T-cell (primary cell): ENCODE measurements at regions of chr13 and their contacts with region 1.

Region 1: DNA sequence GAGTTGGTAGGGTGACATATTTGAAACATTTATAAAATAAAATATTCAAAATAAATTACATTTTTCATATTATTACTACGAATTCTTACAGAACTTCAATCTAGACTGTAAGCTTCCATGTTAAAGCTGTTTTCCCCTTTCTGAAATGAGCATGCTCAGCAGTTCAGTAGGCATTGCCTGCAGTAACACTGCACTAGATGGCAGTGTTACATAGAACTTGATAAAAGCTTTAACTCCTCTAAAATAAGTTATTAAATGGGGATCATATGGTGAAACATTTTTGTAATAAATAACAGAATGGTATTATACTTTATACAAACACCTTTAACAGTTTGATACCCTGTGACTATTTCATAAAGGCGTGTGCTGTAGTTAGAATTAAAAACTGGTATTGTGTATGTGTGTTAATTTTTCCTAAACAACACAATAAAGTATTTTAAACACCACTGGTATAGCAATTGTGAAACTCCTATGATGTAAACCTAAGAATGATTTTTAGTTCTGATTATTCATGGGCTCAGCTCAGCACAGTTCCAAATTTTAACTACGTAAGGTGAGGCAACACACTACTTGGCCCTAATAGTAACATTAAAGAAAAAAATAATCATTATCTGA is 11.6 kb upstream of the GPR18 start:
- DNase-seq: peak in 16 of 35 experiments; percentile 15 to 81 (median 25)
- ATAC-seq: peak; percentile 66 to 81 (median 70)
- H3K4me3 ChIP-seq: no peak overlapping the region
- H3K4me3 Mint-ChIP-seq: no peak overlapping the region
- H3K27ac ChIP-seq: peak overlapping the region; percentile 87
- H3K27ac Mint-ChIP-seq: peak overlapping the region; percentile 84 to 87
- H3K4me1 ChIP-seq: peaks cover 26 to 32% of the 10 kb centered on the region in 2 experiments
- H3K4me1 Mint-ChIP-seq: peaks cover 63 to 65% (median 64%) of the 10 kb centered on the region in 3 donors
- H3K27me3 ChIP-seq: no peaks in the 10 kb centered on the region
- H3K27me3 Mint-ChIP-seq: no peaks in the 10 kb centered on the region

Region 2: DNA sequence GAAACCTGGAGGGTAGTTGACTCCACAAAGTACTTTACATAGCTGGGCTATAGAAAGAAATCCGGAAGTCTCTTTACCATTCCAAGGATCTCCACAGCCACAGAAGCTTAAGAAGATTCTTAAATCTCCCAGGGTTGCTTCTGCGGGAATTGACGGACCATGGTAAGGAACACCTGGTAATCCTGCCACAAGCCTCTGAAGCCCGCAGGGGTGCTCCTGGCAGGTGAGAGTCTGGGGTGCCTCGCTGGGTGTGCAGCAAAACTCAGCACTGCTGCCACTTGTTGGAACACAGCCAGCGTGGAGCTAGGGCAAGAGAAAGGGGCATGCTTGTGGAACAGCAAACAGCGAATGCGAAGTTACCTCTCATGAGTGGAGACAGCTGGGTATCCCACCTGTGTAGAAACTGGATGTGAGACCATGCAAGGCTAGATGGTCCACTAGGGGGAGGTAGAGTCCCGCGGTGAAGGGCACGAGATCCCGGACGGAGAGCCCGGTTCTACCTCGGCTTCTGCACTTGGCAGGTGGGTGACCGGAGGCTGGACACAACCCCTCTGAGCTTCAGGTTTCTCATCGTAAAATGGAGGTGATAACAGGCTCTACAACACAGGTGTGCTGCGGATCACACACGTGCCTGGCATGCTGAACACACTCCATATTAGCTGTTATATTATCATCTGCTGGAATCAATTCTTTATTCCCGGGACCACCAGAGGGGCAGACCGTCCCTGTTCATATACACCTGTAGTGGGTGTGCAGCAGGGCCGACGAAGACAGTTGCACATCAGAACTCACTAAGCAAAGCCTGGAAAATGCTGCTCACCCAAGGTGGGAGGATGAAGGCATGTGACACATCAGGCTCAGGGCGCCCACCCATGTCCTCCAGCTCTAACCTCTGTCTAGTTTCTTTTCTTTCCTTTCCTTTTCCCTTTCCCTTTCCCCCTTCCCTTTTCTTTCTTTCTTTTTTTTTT is 93.1 kb before region 1 on chr13:
- CTCF ChIA-PET with region 1: interaction called, 45 to 246 read pairs
- POLR2A ChIA-PET with region 1: interaction called, 3 to 6 read pairs
- DNase-seq: peak; percentile 33 to 90 (median 72)
- ATAC-seq: peak; percentile 85 to 91 (median 89)
- H3K4me3 ChIP-seq: peak overlapping the region in 1 of 2 donors; percentile 18
- H3K4me3 Mint-ChIP-seq: peak overlapping the region; percentile 48 to 54 (median 52)
- H3K27ac ChIP-seq: no peak overlapping the region
- H3K27ac Mint-ChIP-seq: peak overlapping the region; percentile 49 to 52
- H3K4me1 ChIP-seq: peaks cover 18 to 39% of the 10 kb centered on the region in 2 experiments
- H3K4me1 Mint-ChIP-seq: peaks cover 37 to 45% (median 43%) of the 10 kb centered on the region in 3 donors
- H3K27me3 ChIP-seq: no peaks in the 10 kb centered on the region
- H3K27me3 Mint-ChIP-seq: peaks cover 0 to 4% of the 10 kb centered on the region in 2 donors

Region 3: GRCh38 chr13:99228737-99229691 is 40.7 kb before region 1 on chr13:
- CTCF ChIA-PET with region 1: interaction called, 5 to 6 read pairs
- POLR2A ChIA-PET with region 1: interaction called in 1 of 2 experiments, 11 read pairs
- DNase-seq: peak in 1 of 35 experiments; percentile 60
- ATAC-seq: peak; percentile 39 to 74 (median 47)
- H3K4me3 ChIP-seq: peak overlapping the region; percentile 11 to 39
- H3K4me3 Mint-ChIP-seq: peak overlapping the region; percentile 51 to 75 (median 74)
- H3K27ac ChIP-seq: peak overlapping the region; percentile 74
- H3K27ac Mint-ChIP-seq: peak overlapping the region; percentile 88 to 94
- H3K4me1 ChIP-seq: peaks cover 47 to 66% of the 10 kb centered on the region in 2 experiments
- H3K4me1 Mint-ChIP-seq: peaks cover 71 to 82% (median 79%) of the 10 kb centered on the region in 3 donors
- H3K27me3 ChIP-seq: no peaks in the 10 kb centered on the region
- H3K27me3 Mint-ChIP-seq: no peaks in the 10 kb centered on the region

Region 4: GRCh38 chr13:99301913-99302636 is 32.3 kb after region 1 on chr13:
- CTCF ChIA-PET with region 1: interaction called, 6 to 32 read pairs
- POLR2A ChIA-PET with region 1: interaction called, 4 to 19 read pairs
- DNase-seq: no peak
- ATAC-seq: no peak
- H3K4me3 ChIP-seq: peak overlapping the region; percentile 3 to 68
- H3K4me3 Mint-ChIP-seq: peak overlapping the region; percentile 94 to 99 (median 96)
- H3K27ac ChIP-seq: peak overlapping the region; percentile 80
- H3K27ac Mint-ChIP-seq: peak overlapping the region; percentile 96 to 98
- H3K4me1 ChIP-seq: peaks cover 35 to 58% of the 10 kb centered on the region in 2 experiments
- H3K4me1 Mint-ChIP-seq: peaks cover 71 to 88% (median 81%) of the 10 kb centered on the region in 3 donors
- H3K27me3 ChIP-seq: no peaks in the 10 kb centered on the region
- H3K27me3 Mint-ChIP-seq: no peaks in the 10 kb centered on the region

Region 5: DNA sequence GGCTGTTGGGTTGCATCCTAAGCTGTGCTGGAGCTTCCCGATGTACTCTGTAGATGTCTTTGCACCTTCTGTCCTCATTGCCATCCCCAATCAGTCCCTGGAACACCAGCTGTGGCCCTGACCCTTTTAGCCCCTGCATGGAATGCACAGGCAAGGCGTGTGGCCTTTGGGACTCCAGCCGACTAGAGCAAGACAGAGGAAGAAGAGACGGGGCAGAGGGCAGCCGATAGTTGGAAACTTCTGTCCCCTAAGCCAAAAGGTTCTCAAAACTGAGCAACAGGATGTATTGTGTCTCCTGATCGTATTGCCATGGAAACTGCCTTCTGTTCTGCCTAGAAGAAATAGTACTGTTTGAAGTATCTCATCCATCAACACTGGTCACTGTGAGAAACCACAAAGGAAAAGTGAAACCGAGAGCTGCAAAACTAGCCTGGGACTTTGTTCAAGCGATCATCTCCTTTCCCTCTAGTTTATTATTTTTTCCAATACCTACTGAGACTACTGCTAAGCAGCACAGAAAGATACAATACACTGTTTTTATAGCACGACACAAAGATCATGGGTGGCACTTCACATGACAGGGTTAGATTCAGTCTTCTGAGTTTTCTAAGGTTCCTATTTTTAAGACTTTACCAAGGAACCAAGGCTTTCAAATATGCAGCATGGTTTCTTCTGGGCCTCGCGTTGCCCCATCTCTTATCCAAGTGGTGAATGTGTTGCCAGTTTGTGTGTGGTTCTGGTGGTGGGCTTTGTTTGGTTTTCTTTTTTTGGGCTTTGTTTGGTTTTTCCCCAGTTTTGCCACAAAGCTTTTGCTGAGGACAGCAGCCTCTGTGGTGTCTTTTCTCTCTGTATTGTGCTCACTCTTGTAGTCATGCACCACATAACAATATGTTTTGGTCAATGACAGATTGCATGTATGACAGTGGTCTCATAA is 86.7 kb after region 1 on chr13:
- CTCF ChIA-PET with region 1: interaction called, 5 to 46 read pairs
- POLR2A ChIA-PET with region 1: interaction called in 1 of 2 experiments, 5 read pairs
- DNase-seq: peak in 32 of 35 experiments; percentile 32 to 93 (median 60)
- ATAC-seq: peak; percentile 51 to 73 (median 55)
- H3K4me3 ChIP-seq: peak overlapping the region in 1 of 2 donors; percentile 28
- H3K4me3 Mint-ChIP-seq: peak overlapping the region; percentile 64 to 73 (median 65)
- H3K27ac ChIP-seq: peak overlapping the region; percentile 100
- H3K27ac Mint-ChIP-seq: peak overlapping the region; percentile 99
- H3K4me1 ChIP-seq: peaks cover 92 to 95% of the 10 kb centered on the region in 2 experiments
- H3K4me1 Mint-ChIP-seq: peaks cover 98 to 100% (median 99%) of the 10 kb centered on the region in 3 donors
- H3K27me3 ChIP-seq: no peaks in the 10 kb centered on the region
- H3K27me3 Mint-ChIP-seq: no peaks in the 10 kb centered on the region

Region 6: DNA sequence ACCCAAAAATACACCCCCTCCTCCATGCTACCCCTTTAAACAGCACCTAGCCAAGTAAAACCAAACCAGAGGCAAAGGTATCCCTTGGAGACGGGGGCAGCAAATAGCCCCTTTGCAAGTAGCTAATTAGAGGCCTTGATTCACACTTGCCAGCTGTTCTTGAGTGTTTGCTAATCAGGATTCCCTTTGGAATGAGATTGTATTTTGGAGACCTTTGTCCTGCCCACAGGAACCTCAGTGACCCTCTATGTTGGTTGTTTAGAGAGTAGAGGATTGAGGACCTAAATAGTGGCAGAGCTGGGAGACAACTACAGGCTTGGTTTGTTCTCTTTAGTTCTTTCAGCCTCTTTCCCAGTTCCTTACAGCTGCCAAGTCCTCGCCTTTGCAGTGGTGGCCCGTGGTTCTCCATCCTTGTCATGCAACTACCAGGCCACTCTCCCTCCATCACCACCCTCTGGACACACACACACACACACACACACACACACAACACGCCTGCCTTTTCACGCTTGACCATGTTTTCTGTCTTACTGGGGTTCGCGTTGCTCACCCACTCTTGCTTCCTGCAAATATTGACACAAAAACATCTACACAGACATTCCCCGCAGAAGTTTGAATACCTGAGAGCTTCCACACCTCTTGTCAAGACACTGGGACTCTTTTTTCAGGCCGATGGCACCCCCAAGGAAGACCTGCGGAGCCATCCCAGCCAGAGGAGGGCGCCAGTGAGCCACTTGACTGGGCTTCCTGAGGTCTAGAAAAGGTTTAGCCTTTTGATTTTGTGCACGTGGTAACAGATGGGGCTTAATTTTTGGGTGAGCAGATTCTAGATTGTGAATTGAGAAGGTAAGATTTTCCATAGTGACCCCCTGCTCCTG is 117.4 kb after region 1 on chr13:
- CTCF ChIA-PET with region 1: interaction called, 29 to 57 read pairs
- POLR2A ChIA-PET with region 1: interaction called, 3 to 12 read pairs
- DNase-seq: peak; percentile 68 to 93 (median 85)
- ATAC-seq: peak; percentile 36 to 54 (median 42)
- H3K4me3 ChIP-seq: no peak overlapping the region
- H3K4me3 Mint-ChIP-seq: peak overlapping the region in 1 of 3 donors; percentile 46
- H3K27ac ChIP-seq: peak overlapping the region; percentile 81
- H3K27ac Mint-ChIP-seq: peak overlapping the region; percentile 98
- H3K4me1 ChIP-seq: peaks cover 53 to 76% of the 10 kb centered on the region in 2 experiments
- H3K4me1 Mint-ChIP-seq: peaks cover 65 to 73% (median 73%) of the 10 kb centered on the region in 3 donors
- H3K27me3 ChIP-seq: no peaks in the 10 kb centered on the region
- H3K27me3 Mint-ChIP-seq: no peaks in the 10 kb centered on the region

Region 7: GRCh38 chr13:99442273-99442895 is 172.7 kb after region 1 on chr13:
- CTCF ChIA-PET with region 1: interaction called, 53 to 195 read pairs
- POLR2A ChIA-PET with region 1: interaction called in 1 of 2 experiments, 3 read pairs
- DNase-seq: peak in 25 of 35 experiments; percentile 23 to 81 (median 44)
- ATAC-seq: peak in 3 of 4 experiments; percentile 53 to 76 (median 71)
- H3K4me3 ChIP-seq: no peak overlapping the region
- H3K4me3 Mint-ChIP-seq: no peak overlapping the region
- H3K27ac ChIP-seq: no peak overlapping the region
- H3K27ac Mint-ChIP-seq: no peak overlapping the region
- H3K4me1 ChIP-seq: peaks cover 0 to 2% of the 10 kb centered on the region in 2 experiments
- H3K4me1 Mint-ChIP-seq: peaks cover 5 to 7% (median 7%) of the 10 kb centered on the region in 3 donors
- H3K27me3 ChIP-seq: peaks cover 0 to 5% of the 10 kb centered on the region in 2 experiments
- H3K27me3 Mint-ChIP-seq: no peaks in the 10 kb centered on the region